Left ventricle myocardium inferior (tissue), 1 donor: ENCODE measurements at regions of chr1 and their contacts with region 1.

Region 1: GRCh38 chr1:169427081-169427641 is at the start of gene CCDC181:
- DNase-seq: peak; percentile 55
- H3K4me3 ChIP-seq: peak within 1 kb of the TSS; percentile 72
- H3K27ac ChIP-seq: no peak within 1 kb of the TSS
- H3K4me1 ChIP-seq: peaks cover 7% of the 10 kb centered on the region
- H3K27me3 ChIP-seq: peaks cover 23% of the 10 kb centered on the region
- CTCF ChIP-seq: no peak
- total RNA-seq, gene CCDC181: 1.5 TPM

Region 2: DNA sequence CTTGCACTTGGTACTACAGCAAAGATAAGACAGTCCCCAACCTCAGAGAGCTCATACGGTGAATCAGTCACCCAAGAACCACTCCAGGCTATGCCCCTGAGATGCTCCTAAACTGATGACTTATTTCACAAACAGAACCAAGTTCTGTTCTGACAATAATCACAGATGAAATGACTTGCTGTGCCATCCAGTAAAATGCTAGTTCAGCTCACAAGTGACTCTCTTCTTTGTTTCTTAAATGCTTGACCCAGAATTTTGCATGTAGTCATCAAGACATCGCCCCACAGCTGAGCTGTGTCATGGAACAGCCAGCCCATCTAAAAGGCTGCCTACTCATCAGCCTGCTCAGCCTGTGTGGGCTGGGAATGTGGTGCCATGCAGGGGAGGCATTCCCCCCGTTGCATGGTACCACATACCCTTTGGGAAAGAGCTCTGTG is 64.7 kb after region 1 on chr1:
- intact Hi-C with region 1: loop called (anchors 10 kb)
- DNase-seq: no peak
- H3K4me3 ChIP-seq: no peak overlapping the region
- H3K27ac ChIP-seq: no peak overlapping the region
- H3K4me1 ChIP-seq: peaks cover 25% of the 10 kb centered on the region
- H3K27me3 ChIP-seq: no peaks in the 10 kb centered on the region
- CTCF ChIP-seq: no peak